Activated CD4-positive, alpha-beta T cell treated with anti-CD3 and anti-CD28 coated beads for 36 hours (primary cell): ENCODE measurements at regions of chr21 and their contacts with region 1.

Region 1: DNA sequence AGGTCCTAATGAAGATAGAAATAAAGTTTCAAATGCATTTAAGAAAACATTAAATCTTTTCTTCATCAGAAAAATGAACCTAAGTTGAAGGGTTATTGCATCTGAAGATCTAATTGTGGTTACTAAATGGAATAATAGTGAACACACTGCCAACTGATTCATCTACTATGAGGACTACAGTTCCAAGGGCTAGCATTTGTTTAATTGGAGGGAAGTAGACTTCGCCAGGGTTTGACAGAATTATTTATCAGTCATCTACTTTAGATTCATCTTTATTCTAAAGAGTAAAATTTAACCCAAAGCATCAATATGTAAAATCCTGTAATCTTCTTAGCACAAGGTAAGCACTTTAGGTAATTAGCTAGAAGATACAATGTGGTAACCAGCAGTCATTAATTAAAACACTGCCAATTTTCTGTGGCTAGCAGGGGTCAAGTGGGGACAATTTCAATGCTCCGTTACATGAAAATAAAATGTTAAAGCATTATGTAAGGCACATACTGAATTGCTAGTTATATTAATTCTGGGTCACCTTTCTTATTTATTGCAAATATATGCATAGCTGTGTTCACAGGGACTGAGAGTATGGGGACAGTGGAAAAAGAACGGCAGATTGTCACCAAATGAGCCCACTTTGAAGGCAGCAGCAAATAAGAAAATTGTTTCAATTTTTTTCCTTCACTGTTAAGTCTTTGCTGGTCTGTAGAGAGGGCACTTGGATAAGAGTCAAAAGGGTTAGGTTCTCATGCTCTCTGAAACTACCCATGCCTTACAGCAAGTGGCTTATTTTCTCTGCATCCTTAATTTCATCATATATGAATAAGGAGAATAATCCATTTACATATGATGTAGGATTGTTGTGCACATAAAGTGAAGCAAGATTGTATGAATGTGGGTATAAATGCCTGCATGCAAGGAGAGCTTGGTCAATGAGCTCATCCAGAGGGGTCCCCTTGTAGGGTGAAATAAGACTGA is 416.0 kb downstream of the PCP4 start:
- DNase-seq: no peak
- ATAC-seq: no peak
- H3K4me3 Mint-ChIP-seq: no peak overlapping the region
- H3K27ac Mint-ChIP-seq: no peak overlapping the region
- H3K4me1 Mint-ChIP-seq: no peaks in the 10 kb centered on the region
- H3K27me3 Mint-ChIP-seq: no peaks in the 10 kb centered on the region

Region 2: DNA sequence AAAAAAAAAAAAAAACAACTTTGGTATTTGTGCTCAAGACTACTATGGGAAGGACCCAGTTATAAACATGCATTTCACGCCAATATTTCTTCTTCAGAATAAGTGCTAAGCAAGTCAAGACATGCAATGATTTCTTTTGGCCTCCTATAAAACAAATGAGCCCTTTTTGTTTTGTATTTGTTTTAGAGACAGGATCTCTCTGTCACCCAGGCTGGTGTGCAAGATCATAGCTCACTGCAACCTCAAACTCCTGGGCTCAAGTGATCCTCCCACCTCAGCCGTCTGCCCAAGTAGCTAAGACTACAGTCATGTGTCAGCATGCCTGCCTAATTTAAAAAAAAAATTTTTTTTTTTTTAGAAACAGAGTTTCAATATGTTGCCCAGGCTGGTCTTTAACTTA is 67.3 kb before region 1 on chr21:
- CTCF ChIA-PET with region 1: no interaction called
- POLR2A ChIA-PET with region 1: no interaction called
- intact Hi-C with region 1: no loop called
- DNase-seq: no peak
- ATAC-seq: no peak
- H3K4me3 Mint-ChIP-seq: no peak overlapping the region
- H3K27ac Mint-ChIP-seq: no peak overlapping the region
- H3K4me1 Mint-ChIP-seq: no peaks in the 10 kb centered on the region
- H3K27me3 Mint-ChIP-seq: no peaks in the 10 kb centered on the region

Region 3: DNA sequence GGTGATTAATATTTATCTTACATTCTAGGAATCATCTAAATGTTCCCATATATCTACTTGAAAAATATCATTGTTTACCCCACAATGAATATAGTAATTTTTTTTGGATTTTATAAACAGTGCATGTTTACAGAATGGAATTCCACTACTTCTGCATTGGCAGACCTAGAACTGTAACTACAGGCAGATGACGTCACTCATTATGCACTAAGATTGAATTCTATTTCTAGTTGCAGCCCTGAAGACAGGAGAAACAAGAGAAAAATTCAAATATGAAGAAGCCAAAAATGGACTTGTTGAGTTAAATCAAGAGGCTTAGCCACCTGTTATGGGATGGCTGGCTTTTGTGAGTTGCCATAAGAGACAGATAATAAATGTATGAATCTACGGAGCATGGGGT is 51.2 kb before region 1 on chr21:
- CTCF ChIA-PET with region 1: no interaction called
- POLR2A ChIA-PET with region 1: no interaction called
- intact Hi-C with region 1: loop called in 1 of 2 experiments (anchors 5 kb)
- DNase-seq: no peak
- ATAC-seq: no peak
- H3K4me3 Mint-ChIP-seq: no peak overlapping the region
- H3K27ac Mint-ChIP-seq: no peak overlapping the region
- H3K4me1 Mint-ChIP-seq: no peaks in the 10 kb centered on the region
- H3K27me3 Mint-ChIP-seq: no peaks in the 10 kb centered on the region